ENCODE measurements at regions of chr3 and their contacts with region 1.

Region 1: GRCh38 chr3:112814266-112814665 is 32.4 kb downstream of the CD200R1L start:
- DNase-seq: peak; percentile 58
- H3K4me3 Mint-ChIP-seq: no peak overlapping the region
- H3K27ac Mint-ChIP-seq: no peak overlapping the region
- H3K4me1 Mint-ChIP-seq: peaks cover 11% of the 10 kb centered on the region
- H3K27me3 Mint-ChIP-seq: no peaks in the 10 kb centered on the region
- CTCF ChIP-seq: peak; percentile 33

Region 2: DNA sequence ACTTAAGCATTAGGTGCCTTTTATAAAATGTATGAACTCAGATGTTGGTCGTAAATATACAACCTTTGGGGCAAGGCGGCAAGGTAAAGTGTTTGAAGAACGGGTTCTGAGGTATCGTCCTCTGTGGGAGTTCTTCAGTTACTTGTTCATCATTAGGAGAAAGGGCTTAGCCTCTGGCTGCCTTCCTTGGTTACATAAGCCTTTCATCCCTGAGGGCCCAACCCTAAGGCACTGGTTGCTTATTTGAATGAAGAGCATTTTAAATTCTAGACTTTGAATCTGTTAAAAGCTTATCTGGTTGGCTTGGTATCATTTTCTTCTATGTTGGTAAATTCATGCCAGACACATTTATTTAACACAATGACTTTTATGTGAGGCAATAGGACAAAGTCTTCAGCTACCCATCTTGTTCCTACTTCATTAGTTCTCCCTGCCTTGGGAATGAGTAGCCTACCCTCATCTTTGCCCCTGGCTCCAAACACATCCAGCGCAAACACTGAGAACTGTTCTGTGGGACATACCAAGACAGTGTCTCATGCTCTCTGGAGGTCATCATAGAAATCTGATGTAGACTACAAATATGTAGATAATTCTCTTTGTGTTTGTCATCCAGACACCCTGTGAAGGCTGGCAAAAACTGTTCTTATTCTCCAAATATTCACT is 160.9 kb before region 1 on chr3:
- CTCF ChIA-PET with region 1: interaction called, 16 read pairs
- POLR2A ChIA-PET with region 1: no interaction called
- intact Hi-C with region 1: no loop called
- DNase-seq: peak; percentile 67
- H3K4me3 Mint-ChIP-seq: peak overlapping the region; percentile 4
- H3K27ac Mint-ChIP-seq: peak overlapping the region; percentile 40
- H3K4me1 Mint-ChIP-seq: peaks cover 39% of the 10 kb centered on the region
- H3K27me3 Mint-ChIP-seq: no peaks in the 10 kb centered on the region
- CTCF ChIP-seq: no peak

Region 3: DNA sequence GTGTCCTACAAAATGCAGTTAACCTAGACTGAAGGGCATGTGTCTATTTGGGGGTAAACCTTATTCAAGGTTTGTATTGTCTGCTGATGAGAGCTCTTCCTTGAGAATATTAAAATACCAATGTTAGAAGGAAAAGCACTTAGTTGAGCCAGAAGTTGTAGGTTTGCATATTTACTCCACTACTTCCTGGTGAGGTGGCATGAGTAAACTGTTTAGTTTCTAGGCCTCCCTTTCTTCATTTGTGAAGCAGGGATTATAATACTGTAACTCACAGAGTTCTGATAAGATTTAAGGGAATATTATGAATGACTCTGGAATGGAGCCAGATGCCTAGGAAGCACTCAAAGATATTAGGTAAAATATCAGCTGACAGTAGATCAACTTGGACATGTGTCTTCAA is 14.3 kb before region 1 on chr3:
- CTCF ChIA-PET with region 1: interaction called, 13 read pairs
- POLR2A ChIA-PET with region 1: interaction called, 3 read pairs
- intact Hi-C with region 1: no loop called
- DNase-seq: no peak
- H3K4me3 Mint-ChIP-seq: no peak overlapping the region
- H3K27ac Mint-ChIP-seq: no peak overlapping the region
- H3K4me1 Mint-ChIP-seq: peaks cover 10% of the 10 kb centered on the region
- H3K27me3 Mint-ChIP-seq: no peaks in the 10 kb centered on the region
- CTCF ChIP-seq: no peak

Region 4: DNA sequence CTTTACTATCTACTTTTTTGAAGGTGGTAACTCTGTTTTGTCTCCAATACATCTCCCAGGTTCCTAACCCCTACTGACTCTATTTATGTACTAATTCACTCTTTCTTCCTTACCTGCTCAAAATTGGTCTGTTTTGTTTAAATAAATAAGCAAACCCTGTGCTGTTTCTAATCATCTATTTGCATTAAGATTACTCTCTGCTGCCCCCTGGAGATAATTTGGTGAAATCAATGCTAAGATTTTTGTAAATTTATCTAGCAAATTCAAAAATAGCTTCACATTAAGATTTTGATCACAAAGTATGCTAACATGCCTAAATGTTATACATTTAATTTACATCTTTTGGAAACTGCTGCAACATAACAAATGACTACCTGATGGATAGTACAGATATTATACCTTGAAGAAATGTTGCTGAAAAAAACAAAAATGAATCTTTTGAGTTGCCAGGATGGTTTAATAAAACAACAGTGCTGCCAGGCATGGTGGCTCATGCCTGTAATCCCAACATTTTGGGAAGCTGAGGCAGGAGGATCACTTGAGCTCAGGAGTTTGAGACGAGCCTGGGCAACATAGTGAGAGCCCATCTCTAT is 165.1 kb after region 1 on chr3:
- CTCF ChIA-PET with region 1: interaction called, 24 read pairs
- POLR2A ChIA-PET with region 1: no interaction called
- intact Hi-C with region 1: loop called (anchors 10 kb)
- DNase-seq: peak; percentile 56
- H3K4me3 Mint-ChIP-seq: no peak overlapping the region
- H3K27ac Mint-ChIP-seq: no peak overlapping the region
- H3K4me1 Mint-ChIP-seq: no peaks in the 10 kb centered on the region
- H3K27me3 Mint-ChIP-seq: peaks cover 20% of the 10 kb centered on the region
- CTCF ChIP-seq: peak; percentile 41

Measured in MCF 10A (cell line).